ENCODE measurements at regions of chr6 and their contacts with region 1.

Region 1: GRCh38 chr6:29737707-29738630 is 14.7 kb downstream of the HLA-F start:
- DNase-seq: peak; percentile 63 to 77 (median 72)
- H3K4me3 ChIP-seq: no peak overlapping the region
- H3K27ac ChIP-seq: no peak overlapping the region
- H3K4me1 ChIP-seq: peaks cover 0 to 4% (median 0%) of the 10 kb centered on the region in 4 experiments
- H3K27me3 ChIP-seq: peaks cover 0 to 5% (median 0%) of the 10 kb centered on the region in 5 experiments

Region 2: DNA sequence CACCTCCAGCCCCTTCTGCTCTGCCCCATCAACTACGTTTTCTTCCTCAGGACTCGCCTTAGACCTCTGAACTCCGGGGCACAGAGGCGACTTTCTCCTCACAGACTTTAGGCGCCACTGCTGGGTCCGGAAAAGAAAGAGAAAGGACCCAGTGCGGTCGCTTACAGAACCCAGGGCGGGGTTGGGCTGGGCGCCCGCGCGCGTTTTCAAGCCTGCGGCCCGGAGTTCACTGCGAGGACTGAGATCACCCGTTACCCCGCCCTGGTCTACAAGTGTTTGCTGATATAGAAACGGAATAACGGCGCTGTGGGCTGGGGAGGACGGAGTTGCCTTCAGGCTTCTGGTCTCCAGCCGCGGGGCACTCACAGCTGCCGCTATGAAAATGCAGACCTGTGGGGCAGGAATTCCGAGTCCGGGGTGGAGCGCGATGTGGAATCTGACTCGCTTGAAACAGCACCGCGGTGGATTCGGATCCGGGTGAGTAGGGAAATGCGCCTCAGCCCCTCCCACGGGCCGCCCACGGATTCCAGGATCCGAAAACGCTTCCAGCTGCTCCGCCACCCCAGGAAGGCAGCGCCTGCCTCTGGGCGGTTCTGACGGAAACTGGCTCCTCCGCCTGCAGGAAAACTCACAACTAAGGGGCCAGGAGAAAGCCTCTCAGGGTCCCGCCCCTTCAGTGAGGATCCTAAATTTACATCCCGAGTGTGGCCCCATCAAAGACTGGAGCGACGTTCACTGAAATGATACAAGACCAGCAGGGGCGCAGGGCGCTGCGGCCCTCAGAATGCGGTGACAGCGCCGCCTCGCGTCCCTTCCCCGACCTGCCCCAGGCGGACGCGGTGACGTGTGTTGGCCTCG is 14.7 kb after region 1 on chr6:
- CTCF ChIA-PET with region 1: interaction called, 118 read pairs
- POLR2A ChIA-PET with region 1: interaction called, 10 read pairs
- DNase-seq: peak; percentile 82 to 90 (median 88)
- H3K4me3 ChIP-seq: peak overlapping the region; percentile 75 to 97 (median 84)
- H3K27ac ChIP-seq: peak overlapping the region; percentile 40 to 81
- H3K4me1 ChIP-seq: peaks cover 8 to 33% (median 18%) of the 10 kb centered on the region in 4 experiments
- H3K27me3 ChIP-seq: peaks cover 0 to 9% (median 7%) of the 10 kb centered on the region in 5 experiments

Region 3: GRCh38 chr6:29759457-29759856 is 21.5 kb after region 1 on chr6:
- CTCF ChIA-PET with region 1: interaction called, 118 read pairs
- POLR2A ChIA-PET with region 1: no interaction called
- DNase-seq: no peak
- H3K4me3 ChIP-seq: no peak overlapping the region
- H3K27ac ChIP-seq: no peak overlapping the region
- H3K4me1 ChIP-seq: no peaks in the 10 kb centered on the region
- H3K27me3 ChIP-seq: peaks cover 0 to 4% (median 0%) of the 10 kb centered on the region in 5 experiments

Region 4: DNA sequence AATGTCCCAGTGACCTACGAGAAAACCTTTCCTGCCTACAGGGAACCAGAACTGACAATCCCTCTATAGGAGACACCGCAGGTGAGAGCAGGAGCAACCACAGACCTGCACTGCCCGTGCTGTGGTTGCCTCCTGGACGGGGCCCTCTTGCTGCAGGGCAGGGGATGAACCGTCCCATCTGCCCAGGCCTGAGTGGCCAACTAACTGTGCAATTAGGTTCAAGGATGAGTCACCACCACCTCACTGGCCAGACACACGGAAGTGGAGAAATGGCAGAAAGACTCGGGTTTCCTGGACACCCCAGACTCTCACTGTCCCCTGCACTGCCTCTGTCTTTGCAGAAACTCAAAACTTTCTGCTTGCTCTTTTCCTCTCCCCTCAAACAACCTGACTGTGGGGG is 75.8 kb after region 1 on chr6:
- CTCF ChIA-PET with region 1: no interaction called
- POLR2A ChIA-PET with region 1: no interaction called
- DNase-seq: no peak
- H3K4me3 ChIP-seq: no peak overlapping the region
- H3K27ac ChIP-seq: no peak overlapping the region
- H3K4me1 ChIP-seq: no peaks in the 10 kb centered on the region
- H3K27me3 ChIP-seq: peaks cover 0 to 11% (median 4%) of the 10 kb centered on the region in 5 experiments

Region 5: GRCh38 chr6:29829766-29830165 is 91.8 kb after region 1 on chr6:
- CTCF ChIA-PET with region 1: interaction called, 35 read pairs
- POLR2A ChIA-PET with region 1: no interaction called
- DNase-seq: no peak
- H3K4me3 ChIP-seq: no peak overlapping the region
- H3K27ac ChIP-seq: no peak overlapping the region
- H3K4me1 ChIP-seq: peaks cover 0 to 14% (median 5%) of the 10 kb centered on the region in 4 experiments
- H3K27me3 ChIP-seq: peaks cover 3 to 77% (median 25%) of the 10 kb centered on the region in 5 experiments

Region 6: DNA sequence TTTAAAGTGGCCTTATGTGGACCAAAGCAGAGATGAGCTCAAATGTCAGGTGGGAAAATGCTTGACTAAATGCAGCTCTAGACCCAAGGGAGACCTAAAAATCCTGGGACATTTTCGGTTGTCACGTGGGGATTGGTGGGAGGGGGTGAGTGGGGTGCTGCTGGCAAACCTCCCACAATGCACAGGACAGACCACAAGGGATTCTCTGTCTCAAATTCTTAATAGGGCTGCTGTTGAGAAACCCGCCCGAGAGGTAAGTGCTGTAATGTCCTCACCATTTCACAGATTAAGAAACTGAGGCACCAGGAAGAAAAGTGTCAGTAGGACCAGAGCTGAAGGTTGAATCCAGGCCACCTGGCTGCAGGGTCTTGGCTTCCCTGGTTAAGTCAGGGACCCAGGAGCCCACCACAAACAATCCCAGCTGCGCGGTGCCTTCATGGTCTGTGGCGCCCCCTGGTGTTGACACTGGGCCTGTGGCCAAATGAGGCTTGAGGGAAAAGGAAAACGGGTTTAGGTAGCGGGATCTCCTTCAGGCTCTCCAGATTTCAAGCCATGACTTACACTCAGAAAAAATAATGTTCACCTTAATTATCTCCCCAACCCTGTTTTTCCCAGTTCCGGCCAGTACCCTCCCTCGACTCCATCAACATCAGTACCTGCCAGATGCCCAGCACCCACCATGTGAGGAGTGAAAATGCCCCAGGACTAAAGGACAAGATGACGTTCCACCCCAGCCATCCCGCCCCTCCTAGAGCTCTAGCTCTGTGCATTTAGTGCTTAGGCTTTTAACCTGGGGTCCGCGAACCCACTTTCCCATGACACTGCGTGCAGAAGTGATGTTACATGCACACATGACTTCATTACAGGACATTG is 96.8 kb after region 1 on chr6:
- CTCF ChIA-PET with region 1: interaction called, 35 read pairs
- POLR2A ChIA-PET with region 1: no interaction called
- DNase-seq: peak; percentile 23 to 50 (median 41)
- H3K4me3 ChIP-seq: no peak overlapping the region
- H3K27ac ChIP-seq: no peak overlapping the region
- H3K4me1 ChIP-seq: no peaks in the 10 kb centered on the region
- H3K27me3 ChIP-seq: peaks cover 15 to 63% (median 17%) of the 10 kb centered on the region in 5 experiments

Measured in common myeloid progenitor, CD34-positive (primary cell).